ENCODE measurements at regions of chr17 and their contacts with region 1.

Region 1: GRCh38 chr17:20009302-20010098 is at the start of gene SPECC1:
- DNase-seq: peak; percentile 93
- total RNA-seq, gene SPECC1: 10.1 TPM

Region 2: DNA sequence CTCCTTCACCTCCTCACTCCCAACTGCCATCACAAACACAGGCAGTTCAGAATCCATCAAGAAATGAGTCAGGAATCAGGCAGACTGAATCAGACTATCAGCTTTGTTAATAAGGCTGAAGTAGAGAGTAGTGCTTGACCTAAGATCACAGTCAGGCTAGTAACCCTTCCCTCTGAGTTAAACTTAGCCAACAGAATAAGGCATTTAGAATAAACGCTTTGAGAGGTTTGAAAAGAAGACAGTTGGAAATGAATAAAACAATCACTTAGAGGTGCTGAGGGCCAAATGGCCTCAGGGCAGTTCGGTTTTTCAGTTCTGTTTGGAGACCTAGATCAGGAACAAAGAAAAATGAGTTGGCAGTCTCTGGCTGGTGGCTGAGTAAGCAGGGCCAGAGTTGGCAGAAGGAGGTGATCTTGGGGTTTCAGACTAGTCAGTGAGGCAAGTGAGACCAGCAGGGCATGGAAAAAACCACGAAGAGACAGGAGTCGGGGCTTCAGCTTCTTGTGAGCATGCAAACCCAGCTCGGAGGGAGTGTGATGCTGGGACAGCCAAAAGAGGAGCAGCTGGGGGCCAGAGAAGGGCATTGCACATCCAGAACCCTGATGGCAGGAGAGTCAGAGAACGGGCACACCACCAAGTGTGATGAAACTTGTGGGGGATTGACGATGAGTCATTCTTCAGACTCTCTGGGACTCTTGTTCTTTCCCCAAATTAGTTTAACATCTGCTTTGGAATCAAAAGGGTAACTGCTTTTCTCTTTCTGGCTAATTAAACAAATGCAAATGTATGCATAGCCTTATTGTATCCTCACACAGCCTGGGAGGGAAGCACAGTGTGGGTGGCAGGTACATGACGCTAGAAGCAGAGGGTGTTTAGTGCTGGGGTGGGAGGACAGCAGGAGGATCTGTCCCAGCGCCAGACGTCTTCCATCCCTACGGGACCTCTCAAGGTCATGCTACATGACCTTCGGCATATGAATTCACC is 54.5 kb after region 1 on chr17:
- intact Hi-C with region 1: loop called (anchors 5 kb)
- DNase-seq: no peak

Region 3: GRCh38 chr17:20091174-20092029 is 81.9 kb after region 1 on chr17:
- intact Hi-C with region 1: loop called (anchors 5 kb)
- DNase-seq: no peak

Region 4: GRCh38 chr17:20109076-20109475 is 99.6 kb after region 1 on chr17:
- intact Hi-C with region 1: no loop called
- DNase-seq: no peak